ENCODE measurements at regions of chr17 and their contacts with region 1.

Region 1: DNA sequence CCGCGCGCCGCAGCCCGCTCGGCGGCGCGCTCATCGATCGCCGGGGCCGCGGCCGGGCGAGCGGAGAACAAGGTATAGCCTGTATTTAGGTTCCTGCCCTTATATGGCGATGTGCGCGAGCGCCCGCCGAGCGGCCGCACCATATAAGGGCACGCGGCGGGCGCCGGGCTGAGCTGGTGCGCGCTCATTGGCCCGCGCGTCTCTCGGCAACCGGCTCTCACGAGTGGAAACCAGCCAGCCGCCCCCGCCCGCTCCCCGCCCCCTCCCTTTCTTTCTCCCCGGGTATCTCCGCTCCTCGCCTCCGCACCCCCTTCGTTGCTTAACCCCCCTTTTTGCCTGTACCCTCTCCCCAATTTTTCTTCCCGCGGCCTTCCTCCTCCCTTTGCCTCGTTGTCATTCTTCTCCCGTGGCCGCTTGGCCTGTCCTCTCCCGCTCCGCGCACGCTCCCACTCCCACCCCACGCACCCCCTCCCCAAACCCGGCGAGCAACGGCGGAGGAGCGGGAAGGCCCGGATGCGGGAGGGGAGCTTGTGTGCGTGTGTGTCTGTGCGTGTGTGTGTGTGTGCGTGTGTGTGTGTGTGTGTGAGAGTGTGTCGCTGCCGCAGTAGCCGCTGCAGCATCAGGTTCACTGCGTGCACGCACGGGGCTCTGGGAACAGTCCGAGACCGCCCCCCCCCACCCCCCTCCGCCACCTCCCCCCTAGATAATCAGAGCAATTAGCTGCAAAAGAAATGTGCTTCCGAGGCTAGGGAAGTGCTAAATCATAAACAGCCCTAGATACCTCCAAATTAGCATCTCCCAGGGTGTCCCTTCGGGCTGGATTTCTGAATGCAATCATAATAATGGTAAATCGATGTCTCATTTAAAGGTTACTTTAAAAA is 13.5 kb upstream of the CBX8 start:
- DNase-seq: peak; percentile 97
- H3K4me3 ChIP-seq: peak overlapping the region; percentile 51 to 64
- H3K27ac ChIP-seq: peak overlapping the region in 1 of 2 experiments; percentile 90; a peak in 2 of 4 replicates
- H3K4me1 ChIP-seq: peaks cover 15 to 41% of the 10 kb centered on the region in 2 experiments
- H3K27me3 ChIP-seq: peaks cover 43% of the 10 kb centered on the region
- CTCF ChIP-seq: no peak
- EP300 ChIP-seq: no peak; a peak in 1 of 4 replicates
- RAD21 ChIP-seq: no peak

Region 2: GRCh38 chr17:79777894-79778503 is 32.4 kb before region 1 on chr17 and contains the start of gene CBX2:
- CTCF ChIA-PET with region 1: interaction called, 28 read pairs
- POLR2A ChIA-PET with region 1: interaction called, 6 read pairs
- DNase-seq: peak; percentile 100
- H3K4me3 ChIP-seq: peak within 1 kb of the TSS; percentile 84 to 93
- H3K27ac ChIP-seq: peak within 1 kb of the TSS; percentile 7 to 83; a peak in 2 of 4 replicates
- H3K4me1 ChIP-seq: peaks cover 0 to 20% of the 10 kb centered on the region in 2 experiments; a peak in 3 of 4 replicates
- H3K27me3 ChIP-seq: peaks cover 23% of the 10 kb centered on the region
- CTCF ChIP-seq: peak; percentile 27; the same call in 1 of the 2 replicates
- EP300 ChIP-seq: no peak
- RAD21 ChIP-seq: no peak
- polyA plus RNA-seq, gene CBX2: 19.7 and 22.4 TPM in 2 replicates

Region 3: DNA sequence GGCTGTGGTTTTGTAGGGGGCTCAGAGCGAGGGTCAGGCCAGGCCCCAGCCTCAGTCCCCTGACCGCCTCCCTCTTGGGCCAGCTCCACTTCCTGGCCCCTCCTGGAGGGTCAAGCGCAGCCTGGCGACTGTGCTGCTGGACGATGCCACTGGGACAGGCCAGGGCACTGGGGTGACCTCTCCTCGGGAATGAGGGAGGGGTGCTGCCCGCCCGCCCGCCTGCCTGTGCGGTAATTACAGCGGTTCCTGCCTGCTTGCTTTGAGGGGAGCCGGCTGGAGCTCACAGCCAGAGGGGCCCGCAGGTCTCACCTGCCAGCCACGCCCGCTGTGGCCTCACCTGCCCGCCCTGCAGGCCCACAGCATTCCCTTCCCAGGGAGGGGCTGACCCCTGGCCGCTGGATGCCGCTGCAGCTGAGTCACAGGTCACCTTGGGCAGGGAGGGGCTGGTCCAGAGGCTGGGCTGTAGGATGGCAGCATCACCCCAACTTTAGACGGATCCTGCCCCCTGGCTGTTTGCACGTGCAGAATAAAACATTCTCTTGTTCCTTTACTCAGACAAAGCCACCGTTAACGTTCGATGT is 105.6 kb after region 1 on chr17:
- CTCF ChIA-PET with region 1: interaction called, 12 read pairs
- POLR2A ChIA-PET with region 1: no interaction called
- DNase-seq: no peak
- H3K4me3 ChIP-seq: no peak overlapping the region
- H3K27ac ChIP-seq: no peak overlapping the region
- H3K4me1 ChIP-seq: peaks cover 9 to 27% of the 10 kb centered on the region in 2 experiments; a peak in 2 of 4 replicates
- H3K27me3 ChIP-seq: no peaks in the 10 kb centered on the region
- CTCF ChIP-seq: peak; percentile 35
- EP300 ChIP-seq: no peak
- RAD21 ChIP-seq: peak; percentile 58

Measured in SK-N-SH (cell line).